ENCODE measurements at regions of chr12 and their contacts with region 1.

Region 1: DNA sequence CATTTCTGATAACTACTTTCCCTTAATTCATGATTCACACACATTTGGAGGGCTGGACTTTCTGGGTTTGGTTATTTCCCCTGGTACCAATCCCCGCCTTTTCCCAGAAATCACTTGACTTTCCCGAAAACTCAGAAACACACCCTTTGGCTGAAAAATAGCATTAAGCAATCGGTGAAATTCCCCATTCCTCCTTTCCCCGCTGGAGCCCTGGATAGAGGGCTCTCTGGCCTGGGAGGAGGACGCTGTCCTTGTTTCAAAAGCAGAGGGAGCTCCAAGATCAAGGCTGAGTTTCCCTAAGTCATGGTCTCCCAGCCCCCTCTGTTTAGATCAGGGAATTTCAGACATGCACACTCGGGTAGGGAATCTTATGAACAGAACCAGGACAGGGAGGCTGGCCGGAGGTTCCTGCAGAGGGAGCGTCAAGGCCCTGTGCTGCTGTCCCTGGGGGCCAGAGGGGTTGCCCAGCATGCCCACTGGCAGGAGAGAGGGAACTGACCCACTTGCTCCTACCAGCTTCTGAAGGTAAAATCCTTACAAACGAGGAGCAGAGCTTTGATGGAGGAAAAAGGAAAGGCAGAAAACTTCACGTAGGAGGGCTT is at the start of gene C1S:
- DNase-seq: peak; percentile 73
- ATAC-seq: peak; percentile 96
- H3K4me3 ChIP-seq: peak within 1 kb of the TSS; percentile 43
- H3K27ac ChIP-seq: peak within 1 kb of the TSS; percentile 81
- H3K4me1 ChIP-seq: peaks cover 16% of the 10 kb centered on the region
- H3K27me3 ChIP-seq: no peaks in the 10 kb centered on the region
- CTCF ChIP-seq: peak; percentile 70
- total RNA-seq, gene C1S: 321 TPM

Region 2: GRCh38 chr12:7099290-7099996 is 39.0 kb after region 1 on chr12:
- intact Hi-C with region 1: loop called (anchors 5 kb)
- DNase-seq: peak; percentile 28
- ATAC-seq: peak; percentile 25
- H3K4me3 ChIP-seq: no peak overlapping the region
- H3K27ac ChIP-seq: no peak overlapping the region
- H3K4me1 ChIP-seq: peaks cover 3% of the 10 kb centered on the region
- H3K27me3 ChIP-seq: no peaks in the 10 kb centered on the region
- CTCF ChIP-seq: no peak

Measured in upper lobe of right lung (tissue), 1 donor.